Kidney (tissue), 22 donors: ENCODE measurements at regions of chr3 and their contacts with region 1.

Region 1: GRCh38 chr3:151146071-151146730 is 56.8 kb downstream of the GPR171 start:
- DNase-seq: peak; percentile 78 to 93 (median 83)
- H3K4me3 ChIP-seq: peak overlapping the region in 2 of 3 donors; percentile 3 to 41
- H3K27ac ChIP-seq: no peak overlapping the region
- H3K4me1 ChIP-seq: peaks cover 0 to 8% (median 3%) of the 10 kb centered on the region in 3 donors
- H3K27me3 ChIP-seq: no peaks in the 10 kb centered on the region
- CTCF ChIP-seq: peak; percentile 93

Region 2: GRCh38 chr3:150761831-150762674 is 384.1 kb before region 1 on chr3:
- intact Hi-C with region 1: no loop called
- DNase-seq: peak; percentile 44 to 85 (median 75)
- H3K4me3 ChIP-seq: peak overlapping the region; percentile 62 to 93 (median 91)
- H3K27ac ChIP-seq: peak overlapping the region; percentile 98 to 99
- H3K4me1 ChIP-seq: peaks cover 4 to 13% (median 13%) of the 10 kb centered on the region in 3 donors
- H3K27me3 ChIP-seq: no peaks in the 10 kb centered on the region
- CTCF ChIP-seq: no peak

Region 3: DNA sequence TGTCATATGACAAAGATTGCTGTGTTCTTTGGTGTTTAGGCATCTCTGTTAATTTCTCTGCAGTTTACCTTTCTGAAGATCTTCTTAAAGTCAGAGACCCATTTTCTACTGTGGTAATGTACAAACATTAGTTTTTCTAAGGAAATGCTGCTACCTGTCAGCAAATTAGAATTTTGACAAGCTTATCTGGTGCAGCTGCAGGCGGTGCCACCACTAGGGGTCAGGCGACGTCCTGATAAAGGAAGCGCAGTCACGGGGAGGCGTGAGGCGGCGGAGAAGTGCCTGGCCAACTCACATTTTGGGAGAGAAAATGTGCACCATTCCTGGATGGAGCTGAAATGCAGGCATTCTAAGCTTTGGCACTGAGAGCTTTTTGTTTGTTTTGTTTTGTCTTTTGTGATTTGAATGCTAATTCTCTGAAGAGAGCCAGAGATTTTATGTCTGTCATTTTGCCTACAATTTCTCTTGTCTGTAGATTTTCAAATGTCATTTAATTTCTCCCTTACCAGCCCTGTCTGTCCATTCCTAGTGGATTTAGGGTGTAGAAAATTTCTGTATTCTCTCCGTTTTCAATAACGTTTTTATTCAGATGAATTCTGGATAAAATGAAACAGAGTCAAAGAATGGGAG is 358.3 kb before region 1 on chr3:
- intact Hi-C with region 1: loop called (anchors 10 kb)
- DNase-seq: peak; percentile 80 to 92 (median 85)
- H3K4me3 ChIP-seq: no peak overlapping the region
- H3K27ac ChIP-seq: no peak overlapping the region
- H3K4me1 ChIP-seq: no peaks in the 10 kb centered on the region
- H3K27me3 ChIP-seq: peaks cover 2% of the 10 kb centered on the region
- CTCF ChIP-seq: peak; percentile 90

Region 4: DNA sequence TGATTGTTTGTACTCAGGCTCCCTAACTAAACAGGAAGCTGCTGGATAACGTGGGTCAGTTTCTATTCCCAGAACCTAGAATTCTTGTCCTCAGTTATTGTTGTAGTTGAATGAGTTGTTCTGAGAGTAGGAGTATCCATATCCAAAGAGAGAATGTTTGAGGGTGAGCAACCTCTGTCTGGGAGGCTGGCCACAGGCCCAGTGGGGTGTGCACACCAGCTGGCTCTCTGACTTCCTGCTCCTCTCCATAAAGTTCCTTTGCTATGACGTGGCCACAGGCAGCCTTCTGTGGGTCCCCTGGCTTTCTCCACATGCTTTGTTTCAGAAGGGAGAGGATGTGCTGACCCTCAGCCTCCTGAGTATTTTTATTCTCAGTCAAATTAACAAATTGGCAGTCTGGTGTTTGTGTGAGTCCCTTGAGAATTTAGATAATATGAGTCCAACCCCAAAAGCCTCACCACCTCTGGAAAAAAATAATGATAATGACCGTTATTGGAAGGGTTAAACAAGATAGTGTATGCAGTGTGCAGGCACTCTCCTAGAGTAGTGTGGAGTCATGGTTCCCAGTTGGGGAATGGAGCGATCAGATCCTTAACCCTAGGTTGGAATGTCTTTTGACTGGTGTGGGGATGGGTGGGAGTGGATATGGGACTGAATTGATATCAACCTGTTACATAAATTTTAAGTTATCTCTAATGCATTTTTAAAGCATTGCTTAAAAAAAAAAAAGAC is 108.3 kb before region 1 on chr3:
- intact Hi-C with region 1: no loop called
- DNase-seq: peak in 4 of 5 donors; percentile 21 to 78 (median 48)
- H3K4me3 ChIP-seq: no peak overlapping the region
- H3K27ac ChIP-seq: no peak overlapping the region
- H3K4me1 ChIP-seq: no peaks in the 10 kb centered on the region
- H3K27me3 ChIP-seq: no peaks in the 10 kb centered on the region
- CTCF ChIP-seq: no peak

Region 5: DNA sequence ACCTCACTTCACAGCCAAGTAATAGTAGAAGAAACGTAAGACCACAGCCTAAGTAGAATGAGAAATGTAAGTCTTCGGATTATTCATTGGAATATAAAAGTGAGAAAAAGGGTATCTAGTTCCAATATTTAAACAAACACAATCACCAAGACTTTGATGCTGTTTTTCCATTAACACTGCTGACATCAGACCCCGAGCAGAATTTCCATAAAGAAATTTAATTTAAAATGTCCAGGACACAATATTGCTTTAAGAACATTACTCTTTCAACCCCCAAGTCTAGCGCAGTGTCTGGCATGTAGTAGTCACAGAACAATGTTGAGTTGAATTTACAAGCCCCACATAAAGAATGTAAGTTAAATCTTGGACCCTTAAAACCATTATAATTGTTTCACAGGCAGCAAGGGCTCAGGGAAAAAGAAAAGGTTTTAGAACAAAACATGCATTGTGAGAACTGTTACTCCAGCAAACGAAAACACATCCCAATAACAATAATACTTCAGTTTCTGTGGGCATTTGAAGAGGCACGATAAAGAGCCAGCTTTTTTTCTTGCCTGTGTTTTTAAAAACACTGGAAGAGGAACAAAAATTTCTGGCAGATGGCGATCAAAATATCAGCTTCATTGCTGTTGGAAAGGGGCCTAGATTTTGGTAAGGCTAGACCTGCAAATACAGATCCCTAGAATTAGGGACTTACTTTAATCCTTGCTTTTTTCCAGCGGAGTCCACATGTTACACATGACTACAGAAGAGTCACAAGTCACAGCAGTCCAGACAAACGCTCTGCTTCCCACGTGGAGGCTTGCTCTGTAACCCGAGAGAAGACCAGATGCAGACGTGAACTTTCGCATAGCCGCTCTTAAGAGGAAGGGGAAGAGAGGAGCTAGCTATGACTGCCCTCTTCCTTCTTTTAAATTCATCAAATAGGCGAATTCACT is 392.5 kb after region 1 on chr3:
- intact Hi-C with region 1: no loop called
- DNase-seq: peak in 4 of 5 donors; percentile 43 to 77 (median 64)
- H3K4me3 ChIP-seq: no peak overlapping the region
- H3K27ac ChIP-seq: no peak overlapping the region
- H3K4me1 ChIP-seq: no peaks in the 10 kb centered on the region
- H3K27me3 ChIP-seq: no peaks in the 10 kb centered on the region
- CTCF ChIP-seq: no peak

Region 6: DNA sequence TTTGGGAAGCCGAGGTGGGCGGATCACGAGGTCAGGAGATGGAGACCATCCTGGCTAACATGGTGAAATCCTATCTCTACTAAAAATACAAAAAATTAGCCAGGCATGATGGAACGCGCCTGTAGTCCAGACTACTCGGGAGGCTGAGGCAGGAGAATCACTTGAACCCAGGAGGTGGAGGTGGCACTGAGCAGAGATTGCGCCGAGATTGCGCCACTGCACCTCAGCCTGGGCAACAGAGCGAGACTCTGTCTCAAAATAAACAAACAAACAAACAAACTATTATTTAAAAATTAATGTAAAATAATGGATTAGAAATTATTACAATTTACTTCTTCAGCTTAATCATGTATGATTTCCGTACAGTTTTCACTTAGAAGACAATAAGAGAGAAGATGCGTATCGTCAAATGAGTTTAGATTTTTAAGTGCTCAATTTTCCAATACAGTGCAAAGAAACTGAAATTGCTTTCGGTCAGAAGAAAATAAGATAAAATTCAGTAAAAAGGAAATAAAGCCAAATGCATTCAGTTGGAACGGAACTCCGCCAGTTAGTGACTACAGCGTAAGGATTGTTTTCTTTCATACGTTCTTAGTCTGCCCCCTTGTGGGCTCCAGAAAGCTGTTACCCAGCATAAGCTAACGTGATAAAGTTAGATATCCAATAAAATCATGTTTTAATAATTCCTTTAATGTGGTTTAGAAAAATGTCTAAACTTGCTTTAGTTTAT is 692.5 kb after region 1 on chr3:
- intact Hi-C with region 1: no loop called
- DNase-seq: peak in 4 of 5 donors; percentile 37 to 93 (median 62)
- H3K4me3 ChIP-seq: peak overlapping the region; percentile 34 to 68 (median 57)
- H3K27ac ChIP-seq: no peak overlapping the region
- H3K4me1 ChIP-seq: peaks cover 0 to 2% (median 0%) of the 10 kb centered on the region in 3 donors
- H3K27me3 ChIP-seq: no peaks in the 10 kb centered on the region
- CTCF ChIP-seq: peak; percentile 85